Pancreas (tissue), 10 donors: ENCODE measurements at regions of chr9 and their contacts with region 1.

Region 1: DNA sequence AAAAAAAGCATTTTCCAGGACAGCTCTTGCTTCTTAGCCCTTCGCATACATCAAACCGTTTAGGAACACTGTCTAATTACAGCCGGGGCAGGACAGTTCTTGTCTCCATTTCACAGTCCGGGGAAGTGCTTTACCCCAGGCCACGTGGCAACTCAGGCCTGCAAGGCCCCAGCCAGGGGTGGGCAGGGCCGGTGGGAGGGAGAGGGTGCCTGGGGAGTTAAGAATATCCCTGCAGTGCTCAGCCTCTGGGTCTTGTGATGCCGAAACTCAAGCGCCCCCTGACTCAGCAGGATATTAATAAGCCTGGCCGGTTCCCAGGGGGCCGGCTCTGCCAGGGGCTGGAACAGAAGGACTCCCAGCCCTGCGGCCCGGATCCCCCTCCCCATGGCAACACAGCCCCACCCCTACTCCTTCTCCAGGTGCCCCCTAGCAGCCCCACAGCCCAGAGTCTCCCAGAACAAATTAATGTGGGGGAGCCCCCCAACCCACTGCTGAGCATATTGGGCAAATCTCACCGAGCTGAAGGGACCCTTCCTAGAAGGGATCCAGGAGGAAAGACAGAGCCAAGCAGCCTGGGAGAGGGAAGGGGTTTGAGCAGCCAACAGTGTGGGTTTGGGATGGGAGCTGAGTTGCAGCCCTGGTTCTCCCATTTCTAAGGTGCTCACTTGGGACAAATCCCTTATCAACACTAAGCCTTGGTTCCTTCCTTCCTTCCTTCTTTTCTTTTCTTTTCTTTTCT is 45.3 kb downstream of the PLPP7 start:
- DNase-seq: peak in 1 of 6 donors; percentile 45
- ATAC-seq: peak in 1 of 4 donors; percentile 22
- H3K4me3 ChIP-seq: no peak overlapping the region
- H3K27ac ChIP-seq: no peak overlapping the region
- H3K4me1 ChIP-seq: no peaks in the 10 kb centered on the region
- H3K27me3 ChIP-seq: no peaks in the 10 kb centered on the region
- CTCF ChIP-seq: no peak

Region 2: DNA sequence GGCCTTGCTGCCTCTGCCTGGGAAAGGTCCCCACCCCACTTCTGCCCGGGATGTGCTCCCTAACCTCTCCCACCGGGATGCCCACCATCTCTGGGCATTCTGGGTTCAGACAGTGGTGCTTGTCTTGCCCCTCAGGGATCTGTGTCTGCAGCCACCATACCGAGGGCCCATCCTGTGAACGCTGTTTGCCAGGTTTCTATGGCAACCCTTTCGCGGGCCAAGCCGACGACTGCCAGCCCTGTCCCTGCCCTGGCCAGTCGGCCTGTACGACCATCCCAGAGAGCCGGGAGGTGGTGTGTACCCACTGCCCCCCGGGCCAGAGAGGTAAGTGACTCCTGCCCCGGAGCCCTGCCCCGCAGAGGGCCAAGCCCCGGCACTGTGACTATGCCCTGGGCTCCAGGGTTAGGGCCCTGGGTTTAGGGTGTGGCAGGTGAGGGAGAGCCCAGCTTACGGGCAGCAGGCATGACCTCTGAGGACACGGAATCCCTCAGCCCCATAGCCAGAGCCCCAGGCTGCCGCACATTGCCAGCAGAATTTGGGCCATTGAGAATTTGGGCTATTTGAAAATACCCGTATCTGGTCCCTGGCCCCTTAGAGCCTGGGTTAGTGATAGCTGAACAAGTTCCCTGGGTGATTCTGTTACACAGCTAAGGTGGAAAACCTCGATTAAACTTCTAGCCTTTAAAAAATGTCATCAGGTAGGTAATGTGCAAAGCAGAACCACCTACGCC is 273.7 kb before region 1 on chr9:
- intact Hi-C with region 1: loop called in 2 of 3 experiments (anchors 5 to 10 kb)
- DNase-seq: no peak
- ATAC-seq: no peak
- H3K4me3 ChIP-seq: no peak overlapping the region
- H3K27ac ChIP-seq: no peak overlapping the region
- H3K4me1 ChIP-seq: no peaks in the 10 kb centered on the region
- H3K27me3 ChIP-seq: no peaks in the 10 kb centered on the region
- CTCF ChIP-seq: no peak

Region 3: GRCh38 chr9:131068076-131068816 is 266.6 kb before region 1 on chr9:
- intact Hi-C with region 1: loop called in 2 of 3 experiments (anchors 5 to 10 kb)
- DNase-seq: no peak
- ATAC-seq: no peak
- H3K4me3 ChIP-seq: no peak overlapping the region
- H3K27ac ChIP-seq: no peak overlapping the region
- H3K4me1 ChIP-seq: no peaks in the 10 kb centered on the region
- H3K27me3 ChIP-seq: no peaks in the 10 kb centered on the region
- CTCF ChIP-seq: no peak

Region 4: DNA sequence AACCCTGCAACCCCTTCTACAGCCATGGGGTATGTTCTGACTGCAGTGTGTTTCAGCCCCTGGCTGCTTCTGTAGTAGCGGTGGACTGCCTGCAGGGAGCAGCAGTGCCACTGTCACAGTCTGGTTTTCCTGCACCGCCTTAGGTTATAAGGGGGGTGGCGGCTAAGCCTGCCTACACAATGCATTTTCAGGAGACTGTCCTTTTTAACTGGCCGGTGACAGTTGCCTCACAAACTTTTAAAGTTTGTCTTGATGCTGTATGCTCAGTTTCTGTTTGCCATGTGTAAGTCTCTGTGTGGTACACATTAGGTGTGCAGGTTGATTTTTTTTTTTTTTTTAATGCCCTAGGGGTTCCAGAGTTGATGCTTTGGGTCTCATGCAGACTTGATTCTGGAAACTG is 156.4 kb before region 1 on chr9:
- intact Hi-C with region 1: loop called in 2 of 3 experiments (anchors 10 kb)
- DNase-seq: peak in 5 of 6 donors; percentile 15 to 65 (median 36)
- ATAC-seq: peak; percentile 64 to 95 (median 90)
- H3K4me3 ChIP-seq: no peak overlapping the region
- H3K27ac ChIP-seq: no peak overlapping the region
- H3K4me1 ChIP-seq: no peaks in the 10 kb centered on the region
- H3K27me3 ChIP-seq: no peaks in the 10 kb centered on the region
- CTCF ChIP-seq: peak; percentile 51 to 74 (median 66)